Sigmoid colon (tissue), 7 donors: ENCODE measurements at regions of chr6 and their contacts with region 1.

Region 1: GRCh38 chr6:83192871-83193746 is at the starts of genes PGM3 and RWDD2A:
- DNase-seq: peak; percentile 94
- H3K4me3 ChIP-seq: peak within 1 kb of the TSS; percentile 68 to 94 (median 89)
- H3K27ac ChIP-seq: peak within 1 kb of the TSS; percentile 77 to 88 (median 86)
- H3K4me1 ChIP-seq: peaks cover 0 to 23% (median 16%) of the 10 kb centered on the region in 4 donors
- H3K27me3 ChIP-seq: no peaks in the 10 kb centered on the region
- CTCF ChIP-seq: no peak
- EP300 ChIP-seq: no peak
- POLR2A ChIP-seq: peak; percentile 73 to 75
- total RNA-seq, gene PGM3: 7.2 to 10.4 (median 8.0) TPM
- total RNA-seq, gene RWDD2A: 2.5 to 4.1 (median 3.7) TPM

Region 2: GRCh38 chr6:82247634-82248232 is 945.4 kb before region 1 on chr6 and contains the start of gene IBTK:
- intact Hi-C with region 1: loop called (anchors 10 kb)
- DNase-seq: peak; percentile 97
- H3K4me3 ChIP-seq: peak within 1 kb of the TSS; percentile 70 to 94 (median 82)
- H3K27ac ChIP-seq: peak within 1 kb of the TSS; percentile 89 to 97 (median 92)
- H3K4me1 ChIP-seq: peaks cover 0 to 41% (median 25%) of the 10 kb centered on the region in 4 donors
- H3K27me3 ChIP-seq: no peaks in the 10 kb centered on the region
- CTCF ChIP-seq: no peak
- EP300 ChIP-seq: no peak
- POLR2A ChIP-seq: peak; percentile 52 to 83
- total RNA-seq, gene IBTK: 19.9 to 26.2 (median 25.4) TPM

Region 3: DNA sequence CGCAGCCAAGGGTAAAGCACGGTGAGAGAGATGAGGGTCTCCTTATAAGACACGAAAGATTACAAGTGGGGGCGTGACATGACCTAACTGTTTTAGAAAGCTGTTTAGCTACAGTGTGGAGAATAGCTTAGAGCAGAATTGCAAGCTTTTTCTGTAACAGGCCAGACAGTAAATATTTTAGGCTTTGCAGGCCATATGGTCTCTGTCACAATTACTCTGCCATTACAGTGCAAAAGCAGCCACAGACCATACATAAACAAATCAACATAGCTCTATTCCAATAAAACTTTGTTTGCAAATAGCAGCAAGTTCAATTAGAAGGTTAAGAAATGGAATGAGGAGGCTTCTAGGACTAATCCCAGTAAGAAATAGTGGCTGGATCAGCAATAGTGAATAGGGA is 16.9 kb before region 1 on chr6:
- intact Hi-C with region 1: no loop called
- DNase-seq: no peak
- H3K4me3 ChIP-seq: no peak overlapping the region
- H3K27ac ChIP-seq: peak overlapping the region in 2 of 4 donors; percentile 21 to 34
- H3K4me1 ChIP-seq: peaks cover 0 to 15% (median 7%) of the 10 kb centered on the region in 4 donors
- H3K27me3 ChIP-seq: no peaks in the 10 kb centered on the region
- CTCF ChIP-seq: no peak
- EP300 ChIP-seq: no peak
- POLR2A ChIP-seq: no peak

Region 4: DNA sequence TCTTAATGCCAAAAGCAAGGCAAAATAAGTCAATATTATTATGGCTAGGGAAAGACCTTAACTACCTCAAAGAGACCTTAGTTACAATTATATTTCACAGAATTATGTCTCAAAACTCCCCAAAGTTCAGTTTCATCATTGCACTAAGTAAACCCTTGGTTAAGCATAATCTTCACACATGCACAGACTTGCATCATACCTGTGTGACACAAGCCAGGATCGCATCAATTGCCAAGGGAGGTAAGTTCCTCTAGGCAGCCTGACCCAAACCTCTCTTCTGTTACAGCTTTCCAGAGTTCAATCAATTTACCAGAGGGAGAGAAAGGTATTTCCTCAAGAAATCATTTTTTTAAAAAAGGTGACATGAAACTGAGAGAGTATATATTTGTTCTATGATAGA is 287.4 kb after region 1 on chr6:
- intact Hi-C with region 1: no loop called
- DNase-seq: no peak
- H3K4me3 ChIP-seq: no peak overlapping the region
- H3K27ac ChIP-seq: no peak overlapping the region
- H3K4me1 ChIP-seq: no peaks in the 10 kb centered on the region
- H3K27me3 ChIP-seq: no peaks in the 10 kb centered on the region
- CTCF ChIP-seq: no peak
- EP300 ChIP-seq: no peak
- POLR2A ChIP-seq: no peak